HepG2 (cell line): ENCODE measurements at regions of chr18 and their contacts with region 1.

Region 1: GRCh38 chr18:58043491-58044379 is at the start of gene NEDD4L:
- DNase-seq: peak; percentile 82
- ATAC-seq: peak; percentile 87
- H3K4me3 ChIP-seq: peak within 1 kb of the TSS; percentile 87 to 96 (median 90)
- H3K27ac ChIP-seq: peak within 1 kb of the TSS; percentile 83
- H3K4me1 ChIP-seq: peaks cover 39% of the 10 kb centered on the region
- H3K27me3 ChIP-seq: no peaks in the 10 kb centered on the region; a peak in 1 of 5 replicates
- CTCF ChIP-seq: peak; percentile 94
- EP300 ChIP-seq: peak in 1 of 2 experiments; percentile 36; a peak in 2 of 4 replicates
- POLR2A ChIP-seq: peak in 1 of 2 experiments; percentile 22; a peak in 2 of 4 replicates
- RAD21 ChIP-seq: peak; percentile 94
- total RNA-seq, gene NEDD4L: 155 and 168 TPM in 2 replicates

Region 2: GRCh38 chr18:57748770-57749603 is 294.7 kb before region 1 on chr18:
- CTCF ChIA-PET with region 1: no interaction called
- POLR2A ChIA-PET with region 1: no interaction called
- in situ Hi-C with region 1: no loop called
- intact Hi-C with region 1: no loop called
- DNase-seq: peak; percentile 76
- ATAC-seq: peak; percentile 93
- H3K4me3 ChIP-seq: peak overlapping the region in 1 of 3 experiments; percentile 9; a peak in 1 of 6 replicates
- H3K27ac ChIP-seq: peak overlapping the region; percentile 24
- H3K4me1 ChIP-seq: peaks cover 52% of the 10 kb centered on the region
- H3K27me3 ChIP-seq: no peaks in the 10 kb centered on the region
- CTCF ChIP-seq: no peak
- EP300 ChIP-seq: no peak
- POLR2A ChIP-seq: no peak
- RAD21 ChIP-seq: no peak

Region 3: GRCh38 chr18:57881818-57882413 is 161.8 kb before region 1 on chr18:
- CTCF ChIA-PET with region 1: interaction called, 5 read pairs
- POLR2A ChIA-PET with region 1: no interaction called
- in situ Hi-C with region 1: no loop called
- intact Hi-C with region 1: loop called (anchors 1 kb)
- DNase-seq: peak; percentile 75
- ATAC-seq: peak; percentile 98
- H3K4me3 ChIP-seq: peak overlapping the region; percentile 48 to 67 (median 51); a peak in 5 of 6 replicates
- H3K27ac ChIP-seq: no peak overlapping the region
- H3K4me1 ChIP-seq: peaks cover 22% of the 10 kb centered on the region
- H3K27me3 ChIP-seq: 0 out of 5 replicates have a peak, but pooled peaks cover 0 to 4% of the 10 kb centered on the region in 2 experiments
- CTCF ChIP-seq: peak; percentile 98
- EP300 ChIP-seq: no peak
- POLR2A ChIP-seq: no peak
- RAD21 ChIP-seq: peak; percentile 92

Region 4: GRCh38 chr18:58015065-58015780 is 28.5 kb before region 1 on chr18:
- CTCF ChIA-PET with region 1: no interaction called
- POLR2A ChIA-PET with region 1: interaction called, 14 read pairs
- in situ Hi-C with region 1: no loop called
- intact Hi-C with region 1: loop called (anchors 1 kb)
- DNase-seq: no peak
- ATAC-seq: no peak
- H3K4me3 ChIP-seq: no peak overlapping the region
- H3K27ac ChIP-seq: peak overlapping the region; percentile 70
- H3K4me1 ChIP-seq: peaks cover 94% of the 10 kb centered on the region
- H3K27me3 ChIP-seq: no peaks in the 10 kb centered on the region
- CTCF ChIP-seq: no peak
- EP300 ChIP-seq: no peak
- POLR2A ChIP-seq: no peak
- RAD21 ChIP-seq: no peak

Region 5: DNA sequence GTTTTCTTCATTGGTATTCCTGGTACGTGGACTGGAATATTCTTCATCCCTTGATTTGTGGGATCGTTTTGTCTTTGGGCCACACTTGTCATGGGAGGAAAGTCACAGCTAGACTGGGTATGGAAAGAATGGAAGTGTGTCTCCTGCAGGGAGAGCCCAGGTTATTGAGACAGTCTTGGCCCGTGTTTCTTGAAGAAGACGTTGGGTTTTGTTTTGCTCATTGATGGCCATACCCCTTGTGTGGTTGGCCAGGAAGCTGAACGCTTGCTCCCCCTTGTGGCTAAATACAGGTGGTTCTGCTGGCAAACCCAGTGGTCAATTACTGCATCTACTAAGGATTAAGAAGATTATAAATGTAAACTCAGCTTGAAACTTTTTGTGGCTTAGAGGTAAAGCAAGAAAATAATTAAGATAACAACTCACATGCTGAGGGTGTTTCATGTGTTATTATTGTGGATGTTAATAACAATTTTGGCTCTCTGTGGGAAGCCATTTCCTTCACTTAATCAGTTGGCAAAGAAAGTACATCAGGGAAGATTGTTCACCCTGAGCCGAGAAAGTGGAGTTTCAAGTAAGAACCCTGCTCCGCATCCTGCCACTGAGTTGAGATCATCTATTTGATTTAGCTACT is 92.1 kb after region 1 on chr18:
- CTCF ChIA-PET with region 1: interaction called, 6 read pairs
- POLR2A ChIA-PET with region 1: no interaction called
- in situ Hi-C with region 1: no loop called
- intact Hi-C with region 1: loop called (anchors 5 kb)
- DNase-seq: peak; percentile 31
- ATAC-seq: peak; percentile 51
- H3K4me3 ChIP-seq: no peak overlapping the region
- H3K27ac ChIP-seq: no peak overlapping the region
- H3K4me1 ChIP-seq: peaks cover 78% of the 10 kb centered on the region
- H3K27me3 ChIP-seq: no peaks in the 10 kb centered on the region
- CTCF ChIP-seq: peak; percentile 56
- EP300 ChIP-seq: no peak
- POLR2A ChIP-seq: no peak
- RAD21 ChIP-seq: no peak

Region 6: DNA sequence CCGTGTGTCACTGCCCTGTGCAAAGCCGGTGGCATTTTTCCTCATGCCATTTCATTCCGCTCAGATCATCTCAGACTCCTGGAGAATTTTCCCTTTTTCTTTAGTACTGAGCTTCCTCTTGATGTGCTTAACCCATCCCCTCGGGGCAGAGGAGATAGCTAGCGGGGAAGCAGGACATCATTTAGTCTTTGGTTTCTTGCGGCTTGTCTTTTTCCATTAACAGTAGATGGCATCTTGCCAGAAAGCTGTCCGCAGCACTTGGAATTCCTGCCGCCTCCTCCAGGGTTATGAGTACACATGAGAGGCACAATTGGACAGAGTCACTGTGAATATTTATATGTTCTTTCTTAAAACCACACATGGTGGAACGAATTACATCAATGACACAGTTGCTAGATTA is 358.5 kb after region 1 on chr18:
- CTCF ChIA-PET with region 1: no interaction called
- POLR2A ChIA-PET with region 1: interaction called, 12 read pairs
- in situ Hi-C with region 1: loop called (anchors 5 kb)
- intact Hi-C with region 1: loop called (anchors 2 kb)
- DNase-seq: peak; percentile 58
- ATAC-seq: no peak
- H3K4me3 ChIP-seq: no peak overlapping the region
- H3K27ac ChIP-seq: peak overlapping the region; percentile 98
- H3K4me1 ChIP-seq: peaks cover 100% of the 10 kb centered on the region
- H3K27me3 ChIP-seq: no peaks in the 10 kb centered on the region
- CTCF ChIP-seq: no peak
- EP300 ChIP-seq: no peak
- POLR2A ChIP-seq: no peak
- RAD21 ChIP-seq: no peak

Region 7: GRCh38 chr18:58529714-58530354 is 486.1 kb after region 1 on chr18:
- CTCF ChIA-PET with region 1: no interaction called
- POLR2A ChIA-PET with region 1: no interaction called
- in situ Hi-C with region 1: no loop called
- intact Hi-C with region 1: loop called (anchors 10 kb)
- DNase-seq: peak; percentile 69
- ATAC-seq: peak; percentile 34; the same call in 2 of the 3 replicates
- H3K4me3 ChIP-seq: no peak overlapping the region
- H3K27ac ChIP-seq: no peak overlapping the region
- H3K4me1 ChIP-seq: peaks cover 57% of the 10 kb centered on the region
- H3K27me3 ChIP-seq: no peaks in the 10 kb centered on the region
- CTCF ChIP-seq: peak; percentile 92
- EP300 ChIP-seq: peak in 1 of 2 experiments; percentile 9; a peak in 1 of 4 replicates
- POLR2A ChIP-seq: no peak
- RAD21 ChIP-seq: peak; percentile 90